ENCODE measurements at regions of chr9 and their contacts with region 1.

Region 1: GRCh38 chr9:78791779-78792178 is 494.9 kb downstream of the PSAT1 start:
- DNase-seq: no peak
- ATAC-seq: peak in 4 of 8 donors; percentile 25 to 57 (median 37)
- H3K4me3 ChIP-seq: no peak overlapping the region
- H3K27ac ChIP-seq: peak overlapping the region in 3 of 10 donors; percentile 31 to 60 (median 49)
- H3K4me1 ChIP-seq: no peaks in the 10 kb centered on the region
- H3K27me3 ChIP-seq: no peaks in the 10 kb centered on the region
- CTCF ChIP-seq: no peak

Region 2: GRCh38 chr9:79408617-79409016 is 616.8 kb after region 1 on chr9:
- intact Hi-C with region 1: loop called in 1 of 10 experiments (anchors 10 kb)
- DNase-seq: no peak
- ATAC-seq: no peak
- H3K4me3 ChIP-seq: no peak overlapping the region
- H3K27ac ChIP-seq: no peak overlapping the region
- H3K4me1 ChIP-seq: no peaks in the 10 kb centered on the region
- H3K27me3 ChIP-seq: no peaks in the 10 kb centered on the region
- CTCF ChIP-seq: no peak

Measured in heart right ventricle (tissue), 16 donors.